ENCODE measurements at regions of chr20 and their contacts with region 1.

Region 1: GRCh38 chr20:48999890-49000870 is 45.9 kb upstream of the CSE1L start:
- DNase-seq: no peak
- ATAC-seq: no peak
- H3K4me3 ChIP-seq: no peak overlapping the region
- H3K27ac ChIP-seq: no peak overlapping the region
- H3K4me1 ChIP-seq: no peaks in the 10 kb centered on the region
- H3K27me3 ChIP-seq: no peaks in the 10 kb centered on the region

Region 2: GRCh38 chr20:49078296-49078695 is 78.1 kb after region 1 on chr20:
- intact Hi-C with region 1: loop called in 1 of 2 experiments (anchors 10 kb)
- DNase-seq: no peak
- ATAC-seq: no peak
- H3K4me3 ChIP-seq: no peak overlapping the region
- H3K27ac ChIP-seq: no peak overlapping the region
- H3K4me1 ChIP-seq: no peaks in the 10 kb centered on the region
- H3K27me3 ChIP-seq: no peaks in the 10 kb centered on the region

Measured in aorta (tissue), 5 donors.